AG04450 (cell line): ENCODE measurements at regions of chr6 and their contacts with region 1.

Region 1: GRCh38 chr6:82260997-82261686 is 13.6 kb upstream of the IBTK start:
- DNase-seq: no peak
- H3K4me3 ChIP-seq: no peak overlapping the region
- H3K27ac ChIP-seq: no peak overlapping the region
- H3K27me3 ChIP-seq: no peaks in the 10 kb centered on the region
- CTCF ChIP-seq: no peak

Region 2: GRCh38 chr6:82322386-82322785 is 61.2 kb after region 1 on chr6:
- CTCF ChIA-PET with region 1: no interaction called
- POLR2A ChIA-PET with region 1: no interaction called
- DNase-seq: no peak
- H3K4me3 ChIP-seq: no peak overlapping the region
- H3K27ac ChIP-seq: no peak overlapping the region
- H3K27me3 ChIP-seq: peaks cover 4% of the 10 kb centered on the region
- CTCF ChIP-seq: no peak

Region 3: GRCh38 chr6:83057705-83058321 is 796.7 kb after region 1 on chr6:
- CTCF ChIA-PET with region 1: interaction called, 95 read pairs
- POLR2A ChIA-PET with region 1: no interaction called
- DNase-seq: no peak
- H3K4me3 ChIP-seq: no peak overlapping the region
- H3K27ac ChIP-seq: no peak overlapping the region
- H3K27me3 ChIP-seq: no peaks in the 10 kb centered on the region
- CTCF ChIP-seq: peak; percentile 91